Activated B cell treated with CpG ODN at 0.5 μM for 24 hours (primary cell): ENCODE measurements at regions of chr2 and their contacts with region 1.

Region 1: GRCh38 chr2:68467077-68467960 is at the starts of genes APLF and FBXO48:
- DNase-seq: peak; percentile 96
- ATAC-seq: peak; percentile 94
- H3K4me3 Mint-ChIP-seq: peak within 1 kb of the TSS; percentile 98
- H3K27ac Mint-ChIP-seq: peak within 1 kb of the TSS; percentile 93
- H3K4me1 Mint-ChIP-seq: peaks cover 29% of the 10 kb centered on the region
- H3K27me3 Mint-ChIP-seq: no peaks in the 10 kb centered on the region
- CTCF ChIP-seq: no peak
- total RNA-seq, gene APLF: 6.4 and 6.8 TPM in 2 replicates
- total RNA-seq, gene FBXO48: 1.8 and 2.6 TPM in 2 replicates

Region 2: GRCh38 chr2:67945940-67946339 is 521.4 kb before region 1 on chr2:
- CTCF ChIA-PET with region 1: no interaction called
- POLR2A ChIA-PET with region 1: no interaction called
- intact Hi-C with region 1: no loop called
- DNase-seq: no peak
- ATAC-seq: no peak
- H3K4me3 Mint-ChIP-seq: no peak overlapping the region
- H3K27ac Mint-ChIP-seq: no peak overlapping the region
- H3K4me1 Mint-ChIP-seq: peaks cover 2% of the 10 kb centered on the region
- H3K27me3 Mint-ChIP-seq: peaks cover 7% of the 10 kb centered on the region
- CTCF ChIP-seq: no peak

Region 3: DNA sequence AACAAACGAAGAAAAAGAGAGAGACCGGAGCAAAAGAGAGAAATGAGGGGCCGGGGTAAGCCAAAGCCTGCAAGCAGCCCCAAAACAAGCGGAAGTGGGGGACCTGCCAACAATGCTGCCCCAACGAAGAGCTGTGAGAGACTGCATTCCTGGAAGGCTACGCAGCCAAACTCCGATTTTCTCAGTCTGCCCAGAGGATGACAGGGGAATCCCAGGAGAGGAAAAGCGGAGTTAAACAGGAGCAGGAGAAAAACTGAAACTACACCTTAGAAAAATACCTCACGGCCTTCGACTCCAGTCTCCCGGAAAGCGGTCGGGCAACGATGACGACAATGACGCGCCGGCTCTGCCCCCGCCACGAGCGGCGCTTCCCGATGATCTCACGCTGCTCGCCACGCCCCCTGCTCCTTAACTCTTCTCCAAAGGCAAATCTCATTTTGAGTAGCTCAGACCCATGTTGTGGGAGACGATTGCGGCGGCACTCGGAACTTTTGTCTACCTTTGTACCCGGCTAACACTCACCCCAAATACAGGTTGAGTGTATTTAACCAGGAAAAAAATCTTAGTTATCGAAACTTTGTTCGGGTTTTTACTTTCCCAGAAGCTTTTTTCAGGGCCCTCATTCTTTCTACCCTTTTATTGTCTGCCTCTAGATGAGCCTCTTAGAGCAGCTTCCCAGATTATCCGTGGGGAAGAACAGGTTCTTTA is 404.5 kb before region 1 on chr2 and contains the start of gene C1D:
- CTCF ChIA-PET with region 1: no interaction called
- POLR2A ChIA-PET with region 1: no interaction called
- intact Hi-C with region 1: loop called (anchors 5 kb)
- DNase-seq: peak; percentile 94
- ATAC-seq: peak; percentile 92
- H3K4me3 Mint-ChIP-seq: peak within 1 kb of the TSS; percentile 93
- H3K27ac Mint-ChIP-seq: peak within 1 kb of the TSS; percentile 95
- H3K4me1 Mint-ChIP-seq: peaks cover 41% of the 10 kb centered on the region
- H3K27me3 Mint-ChIP-seq: peaks cover 2% of the 10 kb centered on the region
- CTCF ChIP-seq: no peak
- total RNA-seq, gene C1D: 21.5 and 25.2 TPM in 2 replicates

Region 4: GRCh38 chr2:68487773-68488355 is 20.5 kb after region 1 on chr2:
- CTCF ChIA-PET with region 1: interaction called, 40 read pairs
- POLR2A ChIA-PET with region 1: interaction called, 5 read pairs
- intact Hi-C with region 1: loop called (anchors 1 kb)
- DNase-seq: no peak
- ATAC-seq: peak; percentile 54
- H3K4me3 Mint-ChIP-seq: no peak overlapping the region
- H3K27ac Mint-ChIP-seq: no peak overlapping the region
- H3K4me1 Mint-ChIP-seq: peaks cover 5% of the 10 kb centered on the region
- H3K27me3 Mint-ChIP-seq: no peaks in the 10 kb centered on the region
- CTCF ChIP-seq: peak; percentile 39

Region 5: DNA sequence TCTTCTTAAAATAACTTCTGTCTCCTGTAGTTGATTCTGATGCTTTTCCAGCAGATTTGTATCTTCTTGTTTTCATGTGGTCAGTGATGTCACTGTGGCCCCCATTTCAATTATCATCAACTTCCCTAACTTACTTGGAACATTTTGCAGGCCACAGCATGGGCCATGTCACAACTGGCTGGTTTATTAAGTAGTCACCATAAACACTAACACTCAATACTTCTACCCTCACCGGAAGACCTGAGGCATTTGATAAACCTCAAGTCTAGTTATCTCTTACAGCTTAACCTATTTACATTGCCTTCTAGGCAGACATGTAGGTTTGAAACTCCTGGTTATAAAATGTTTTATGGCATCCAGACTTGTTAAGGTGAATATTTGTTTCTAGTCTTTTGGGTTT is 138.6 kb after region 1 on chr2:
- CTCF ChIA-PET with region 1: no interaction called
- POLR2A ChIA-PET with region 1: no interaction called
- intact Hi-C with region 1: no loop called
- DNase-seq: no peak
- ATAC-seq: no peak
- H3K4me3 Mint-ChIP-seq: no peak overlapping the region
- H3K27ac Mint-ChIP-seq: no peak overlapping the region
- H3K4me1 Mint-ChIP-seq: no peaks in the 10 kb centered on the region
- H3K27me3 Mint-ChIP-seq: no peaks in the 10 kb centered on the region
- CTCF ChIP-seq: no peak

Region 6: GRCh38 chr2:68734688-68735525 is 267.6 kb after region 1 on chr2 and contains the start of gene ARHGAP25:
- CTCF ChIA-PET with region 1: no interaction called
- POLR2A ChIA-PET with region 1: no interaction called
- intact Hi-C with region 1: loop called (anchors 1 kb)
- DNase-seq: peak; percentile 45
- ATAC-seq: peak; percentile 74
- H3K4me3 Mint-ChIP-seq: no peak within 1 kb of the TSS
- H3K27ac Mint-ChIP-seq: no peak within 1 kb of the TSS
- H3K4me1 Mint-ChIP-seq: peaks cover 37% of the 10 kb centered on the region
- H3K27me3 Mint-ChIP-seq: no peaks in the 10 kb centered on the region
- CTCF ChIP-seq: no peak
- total RNA-seq, gene ARHGAP25: 324 and 336 TPM in 2 replicates

Region 7: GRCh38 chr2:68909793-68910674 is 442.7 kb after region 1 on chr2:
- CTCF ChIA-PET with region 1: interaction called, 47 read pairs
- POLR2A ChIA-PET with region 1: interaction called, 16 read pairs
- intact Hi-C with region 1: loop called (anchors 1 kb)
- DNase-seq: peak; percentile 45
- ATAC-seq: peak; percentile 58
- H3K4me3 Mint-ChIP-seq: no peak overlapping the region
- H3K27ac Mint-ChIP-seq: peak overlapping the region; percentile 60
- H3K4me1 Mint-ChIP-seq: peaks cover 34% of the 10 kb centered on the region
- H3K27me3 Mint-ChIP-seq: no peaks in the 10 kb centered on the region
- CTCF ChIP-seq: no peak

Region 8: GRCh38 chr2:69436938-69437750 is 969.8 kb after region 1 on chr2 and contains the start of gene NFU1:
- CTCF ChIA-PET with region 1: interaction called, 3 read pairs
- POLR2A ChIA-PET with region 1: interaction called, 4 read pairs
- intact Hi-C with region 1: loop called (anchors 5 kb)
- DNase-seq: peak; percentile 85
- ATAC-seq: peak; percentile 95
- H3K4me3 Mint-ChIP-seq: peak within 1 kb of the TSS; percentile 96
- H3K27ac Mint-ChIP-seq: peak within 1 kb of the TSS; percentile 93
- H3K4me1 Mint-ChIP-seq: peaks cover 34% of the 10 kb centered on the region
- H3K27me3 Mint-ChIP-seq: no peaks in the 10 kb centered on the region
- CTCF ChIP-seq: no peak
- total RNA-seq, gene NFU1: 24.3 and 31.1 TPM in 2 replicates

Region 9: GRCh38 chr2:70301344-70302194 is 1834.2 kb after region 1 on chr2 and contains the start of gene FAM136A:
- CTCF ChIA-PET with region 1: no interaction called
- POLR2A ChIA-PET with region 1: no interaction called
- intact Hi-C with region 1: loop called (anchors 5 kb)
- DNase-seq: peak; percentile 90
- ATAC-seq: peak; percentile 92
- H3K4me3 Mint-ChIP-seq: peak within 1 kb of the TSS; percentile 90
- H3K27ac Mint-ChIP-seq: peak within 1 kb of the TSS; percentile 95
- H3K4me1 Mint-ChIP-seq: peaks cover 22% of the 10 kb centered on the region
- H3K27me3 Mint-ChIP-seq: no peaks in the 10 kb centered on the region
- CTCF ChIP-seq: no peak
- total RNA-seq, gene FAM136A: 38.9 and 41.0 TPM in 2 replicates